K562 (cell line): ENCODE measurements at regions of chr1 and their contacts with region 1.

Region 1: GRCh38 chr1:200620273-200621131 is at the start of gene KIF14:
- DNase-seq: peak; percentile 99
- ATAC-seq: peak; percentile 99
- H3K4me3 ChIP-seq: peak within 1 kb of the TSS; percentile 75
- H3K27ac ChIP-seq: peak within 1 kb of the TSS; percentile 88
- H3K4me1 ChIP-seq: peaks cover 3 to 15% of the 10 kb centered on the region in 2 experiments; a peak in 4 of 5 replicates
- H3K27me3 ChIP-seq: no peaks in the 10 kb centered on the region
- CTCF ChIP-seq: no peak
- EP300 ChIP-seq: no peak; the same call in 1 of the 2 replicates
- POLR2A ChIP-seq: peak; percentile 94
- RAD21 ChIP-seq: no peak
- polyA plus RNA-seq, gene KIF14: 11.5 to 14.0 TPM

Region 2: GRCh38 chr1:200558866-200559459 is 61.5 kb before region 1 on chr1:
- CTCF ChIA-PET with region 1: no interaction called
- POLR2A ChIA-PET with region 1: no interaction called
- in situ Hi-C with region 1: no loop called
- intact Hi-C with region 1: loop called (anchors 5 kb)
- DNase-seq: peak in 2 of 4 experiments; percentile 28 to 57
- ATAC-seq: peak; percentile 89
- H3K4me3 ChIP-seq: no peak overlapping the region
- H3K27ac ChIP-seq: no peak overlapping the region
- H3K4me1 ChIP-seq: no peaks in the 10 kb centered on the region
- H3K27me3 ChIP-seq: no peaks in the 10 kb centered on the region
- CTCF ChIP-seq: peak; percentile 47 to 77 (median 62); a peak in 5 of 6 replicates
- EP300 ChIP-seq: no peak
- POLR2A ChIP-seq: no peak
- RAD21 ChIP-seq: peak; percentile 66 to 77

Region 3: GRCh38 chr1:200634261-200635122 is 14.0 kb after region 1 on chr1:
- CTCF ChIA-PET with region 1: no interaction called
- POLR2A ChIA-PET with region 1: interaction called, 10 read pairs
- in situ Hi-C with region 1: no loop called
- intact Hi-C with region 1: no loop called
- DNase-seq: no peak
- ATAC-seq: no peak
- H3K4me3 ChIP-seq: no peak overlapping the region
- H3K27ac ChIP-seq: no peak overlapping the region
- H3K4me1 ChIP-seq: peaks cover 14% of the 10 kb centered on the region in 2 experiments
- H3K27me3 ChIP-seq: no peaks in the 10 kb centered on the region
- CTCF ChIP-seq: peak; percentile 44 to 58 (median 55)
- EP300 ChIP-seq: no peak
- POLR2A ChIP-seq: no peak
- RAD21 ChIP-seq: peak in 1 of 2 experiments; percentile 63; a peak in 2 of 4 replicates

Region 4: GRCh38 chr1:200659269-200659668 is 38.8 kb after region 1 on chr1:
- CTCF ChIA-PET with region 1: no interaction called
- POLR2A ChIA-PET with region 1: no interaction called
- in situ Hi-C with region 1: no loop called
- intact Hi-C with region 1: no loop called
- DNase-seq: no peak
- ATAC-seq: no peak
- H3K4me3 ChIP-seq: no peak overlapping the region
- H3K27ac ChIP-seq: no peak overlapping the region
- H3K4me1 ChIP-seq: peaks cover 0 to 3% of the 10 kb centered on the region in 2 experiments; a peak in 1 of 5 replicates
- H3K27me3 ChIP-seq: no peaks in the 10 kb centered on the region
- CTCF ChIP-seq: no peak
- EP300 ChIP-seq: no peak
- POLR2A ChIP-seq: no peak
- RAD21 ChIP-seq: no peak

Region 5: DNA sequence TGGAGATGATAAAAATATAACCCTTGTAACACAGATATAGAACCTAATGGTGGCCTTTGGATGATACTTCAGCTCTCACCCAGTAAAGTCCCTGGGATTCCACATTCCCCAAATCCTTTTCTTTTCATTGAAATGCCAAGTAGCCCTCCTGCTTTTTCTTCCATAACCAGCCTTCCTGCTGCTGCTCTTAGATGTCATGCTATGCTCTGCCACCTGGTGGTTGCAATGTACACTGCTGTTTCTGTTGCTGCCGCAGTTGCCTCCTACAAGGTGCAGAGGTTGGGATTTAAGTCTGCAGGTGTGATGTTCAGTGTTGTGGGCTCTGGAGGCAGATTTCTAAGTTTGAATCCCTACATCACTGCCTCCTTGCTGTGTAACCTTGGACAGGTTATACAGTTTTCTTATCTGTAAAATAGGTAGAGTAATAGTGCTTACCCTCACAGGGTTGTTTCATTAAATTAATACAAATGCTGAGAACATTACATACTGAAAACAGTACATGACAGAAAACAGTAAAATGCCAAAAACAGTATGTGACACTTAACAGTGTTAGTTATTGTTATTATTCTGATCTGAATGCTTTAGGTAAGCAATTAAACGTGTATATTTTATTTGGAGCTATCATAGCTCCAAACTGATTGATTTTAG is 182.5 kb after region 1 on chr1:
- CTCF ChIA-PET with region 1: interaction called, 110 read pairs
- POLR2A ChIA-PET with region 1: interaction called, 3 read pairs
- in situ Hi-C with region 1: loop called (anchors 5 kb)
- intact Hi-C with region 1: loop called (anchors 1 kb)
- DNase-seq: peak; percentile 71 to 88 (median 74)
- ATAC-seq: peak; percentile 99
- H3K4me3 ChIP-seq: no peak overlapping the region
- H3K27ac ChIP-seq: no peak overlapping the region
- H3K4me1 ChIP-seq: no peaks in the 10 kb centered on the region
- H3K27me3 ChIP-seq: no peaks in the 10 kb centered on the region
- CTCF ChIP-seq: peak; percentile 94 to 96 (median 95)
- EP300 ChIP-seq: no peak
- POLR2A ChIP-seq: no peak
- RAD21 ChIP-seq: peak; percentile 98 to 99

Region 6: GRCh38 chr1:201023517-201023902 is 403.0 kb after region 1 on chr1 and contains the start of gene KIF21B:
- CTCF ChIA-PET with region 1: no interaction called
- POLR2A ChIA-PET with region 1: interaction called, 3 read pairs
- in situ Hi-C with region 1: no loop called
- intact Hi-C with region 1: loop called (anchors 5 kb)
- DNase-seq: peak; percentile 94 to 99 (median 98)
- ATAC-seq: peak; percentile 91
- H3K4me3 ChIP-seq: peak within 1 kb of the TSS; percentile 56
- H3K27ac ChIP-seq: peak within 1 kb of the TSS; percentile 43; the same call in 2 of the 3 replicates
- H3K4me1 ChIP-seq: peaks cover 52 to 78% of the 10 kb centered on the region in 2 experiments
- H3K27me3 ChIP-seq: peaks cover 0 to 2% of the 10 kb centered on the region in 2 experiments; a peak in 1 of 5 replicates
- CTCF ChIP-seq: no peak
- EP300 ChIP-seq: no peak
- POLR2A ChIP-seq: no peak
- RAD21 ChIP-seq: no peak
- polyA plus RNA-seq, gene KIF21B: 0.46 to 0.48 TPM

Region 7: DNA sequence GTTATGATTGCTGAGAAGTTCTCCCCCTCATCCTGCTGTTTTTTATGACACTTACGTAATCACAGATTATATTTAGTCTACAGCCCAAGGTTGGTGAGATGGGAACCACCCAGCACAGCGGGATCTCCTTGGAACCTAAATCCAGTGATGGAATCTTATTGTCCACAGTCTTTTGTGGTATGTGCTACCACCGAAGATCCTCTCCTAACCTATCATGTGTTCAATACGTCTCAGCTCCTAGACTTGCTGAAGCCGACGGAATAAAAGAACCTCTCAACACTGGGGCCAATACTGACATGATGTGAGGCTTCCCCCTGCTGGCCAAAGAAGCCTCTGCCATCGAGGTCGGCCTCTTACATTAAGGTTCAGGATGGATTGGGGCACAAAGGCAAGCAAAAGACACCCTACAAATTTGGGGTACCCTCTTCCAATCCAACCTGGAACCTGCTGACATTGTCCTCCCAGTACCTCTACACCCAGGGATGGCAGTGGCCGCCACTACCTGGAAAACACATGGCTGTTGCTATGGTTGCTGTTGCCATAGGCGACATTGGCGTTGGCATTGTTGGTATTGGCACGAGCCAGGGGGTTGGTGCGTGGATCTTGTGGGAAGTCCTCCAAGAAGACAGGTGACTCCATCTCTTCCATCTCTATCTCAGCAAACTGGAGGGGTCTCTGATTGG is 422.4 kb after region 1 on chr1:
- CTCF ChIA-PET with region 1: interaction called, 3 read pairs
- POLR2A ChIA-PET with region 1: no interaction called
- in situ Hi-C with region 1: no loop called
- intact Hi-C with region 1: loop called (anchors 5 kb)
- DNase-seq: peak; percentile 73 to 78 (median 76)
- ATAC-seq: peak; percentile 92
- H3K4me3 ChIP-seq: no peak overlapping the region
- H3K27ac ChIP-seq: no peak overlapping the region
- H3K4me1 ChIP-seq: no peaks in the 10 kb centered on the region
- H3K27me3 ChIP-seq: peaks cover 0 to 15% of the 10 kb centered on the region in 2 experiments; a peak in 3 of 5 replicates
- CTCF ChIP-seq: peak; percentile 91 to 97 (median 95)
- EP300 ChIP-seq: no peak
- POLR2A ChIP-seq: no peak
- RAD21 ChIP-seq: peak; percentile 98 to 99